ENCODE measurements at regions of chr12 and their contacts with region 1.

Region 1: GRCh38 chr12:95942524-95943329 is at the start of gene CCDC38:
- DNase-seq: peak; percentile 78
- H3K4me3 Mint-ChIP-seq: peak within 1 kb of the TSS; percentile 92
- H3K27ac Mint-ChIP-seq: peak within 1 kb of the TSS; percentile 95
- H3K4me1 Mint-ChIP-seq: peaks cover 5% of the 10 kb centered on the region
- H3K27me3 Mint-ChIP-seq: peaks cover 24% of the 10 kb centered on the region
- total RNA-seq, gene CCDC38: not detected in 2 replicates

Region 2: GRCh38 chr12:95003213-95003920 is 939.4 kb before region 1 on chr12 and contains the start of gene NDUFA12:
- intact Hi-C with region 1: loop called (anchors 5 kb)
- DNase-seq: peak; percentile 94
- H3K4me3 Mint-ChIP-seq: peak within 1 kb of the TSS; percentile 95
- H3K27ac Mint-ChIP-seq: peak within 1 kb of the TSS; percentile 93
- H3K4me1 Mint-ChIP-seq: peaks cover 30% of the 10 kb centered on the region
- H3K27me3 Mint-ChIP-seq: no peaks in the 10 kb centered on the region
- total RNA-seq, gene NDUFA12: 113 TPM in 2 replicates

Region 3: DNA sequence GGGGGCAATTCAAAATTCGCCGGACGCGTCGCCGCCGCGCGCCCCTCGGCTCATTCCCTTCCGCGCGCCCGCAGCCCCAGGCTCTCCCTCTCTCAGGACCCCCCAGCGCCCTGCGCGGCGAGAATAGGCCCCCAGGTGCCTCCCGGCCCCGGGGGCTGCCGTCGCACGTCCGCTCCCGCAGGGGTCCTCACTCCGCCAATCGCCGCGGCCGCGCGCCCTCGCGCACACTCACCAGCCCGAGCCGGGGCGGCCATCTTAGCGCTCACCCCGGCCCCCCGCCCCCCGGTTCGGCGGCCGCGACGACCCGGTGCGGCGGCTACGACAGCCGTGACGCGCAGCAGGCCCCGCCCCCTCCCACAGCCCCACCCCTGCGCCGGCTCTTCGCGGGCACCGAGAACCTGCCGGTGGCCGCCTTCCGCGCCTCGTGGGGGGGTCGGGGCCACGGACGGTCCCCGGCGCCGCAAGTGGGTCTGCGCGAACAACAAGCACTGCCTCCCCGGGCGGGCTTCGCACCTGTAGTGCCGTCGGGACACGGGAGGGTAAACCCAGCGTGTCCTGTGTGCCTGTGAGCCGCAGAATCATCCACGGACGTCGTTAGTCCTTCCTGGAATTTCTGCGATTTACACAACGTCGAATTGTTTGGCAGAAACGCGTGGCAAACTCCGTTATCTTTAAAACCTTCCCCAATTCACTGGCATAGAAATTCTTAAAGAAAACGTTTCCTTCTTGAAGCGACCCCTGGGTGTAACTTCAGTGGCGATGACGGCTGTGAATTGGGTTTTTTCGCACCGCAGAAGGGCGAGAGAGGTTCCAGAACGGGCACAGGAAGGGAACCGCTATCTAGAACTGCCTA is 394.0 kb before region 1 on chr12:
- intact Hi-C with region 1: loop called (anchors 5 kb)
- DNase-seq: peak; percentile 66
- H3K4me3 Mint-ChIP-seq: peak overlapping the region; percentile 91
- H3K27ac Mint-ChIP-seq: peak overlapping the region; percentile 62
- H3K4me1 Mint-ChIP-seq: peaks cover 34% of the 10 kb centered on the region
- H3K27me3 Mint-ChIP-seq: peaks cover 3% of the 10 kb centered on the region

Region 4: DNA sequence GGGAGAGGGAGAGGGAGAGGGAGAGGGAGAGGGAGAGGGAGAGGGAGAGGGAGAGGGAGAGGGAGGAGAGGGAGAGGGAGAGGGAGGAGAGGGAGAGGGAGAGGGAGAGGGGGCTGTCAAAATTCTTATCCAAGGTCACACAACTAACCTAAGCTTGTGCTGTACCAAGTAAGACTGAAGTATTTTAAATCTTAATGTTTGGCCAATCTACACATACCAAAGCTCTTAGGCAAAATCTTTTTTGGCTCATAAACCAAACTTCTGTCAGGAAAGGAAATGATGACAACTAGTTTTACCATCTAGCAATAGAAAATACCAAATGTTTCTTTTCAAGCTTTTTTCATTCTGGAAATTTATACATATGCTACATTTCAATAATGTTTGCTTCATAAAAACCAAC is 34.2 kb before region 1 on chr12:
- intact Hi-C with region 1: no loop called
- DNase-seq: no peak
- H3K4me3 Mint-ChIP-seq: no peak overlapping the region
- H3K27ac Mint-ChIP-seq: no peak overlapping the region
- H3K4me1 Mint-ChIP-seq: no peaks in the 10 kb centered on the region
- H3K27me3 Mint-ChIP-seq: peaks cover 20% of the 10 kb centered on the region

Region 5: DNA sequence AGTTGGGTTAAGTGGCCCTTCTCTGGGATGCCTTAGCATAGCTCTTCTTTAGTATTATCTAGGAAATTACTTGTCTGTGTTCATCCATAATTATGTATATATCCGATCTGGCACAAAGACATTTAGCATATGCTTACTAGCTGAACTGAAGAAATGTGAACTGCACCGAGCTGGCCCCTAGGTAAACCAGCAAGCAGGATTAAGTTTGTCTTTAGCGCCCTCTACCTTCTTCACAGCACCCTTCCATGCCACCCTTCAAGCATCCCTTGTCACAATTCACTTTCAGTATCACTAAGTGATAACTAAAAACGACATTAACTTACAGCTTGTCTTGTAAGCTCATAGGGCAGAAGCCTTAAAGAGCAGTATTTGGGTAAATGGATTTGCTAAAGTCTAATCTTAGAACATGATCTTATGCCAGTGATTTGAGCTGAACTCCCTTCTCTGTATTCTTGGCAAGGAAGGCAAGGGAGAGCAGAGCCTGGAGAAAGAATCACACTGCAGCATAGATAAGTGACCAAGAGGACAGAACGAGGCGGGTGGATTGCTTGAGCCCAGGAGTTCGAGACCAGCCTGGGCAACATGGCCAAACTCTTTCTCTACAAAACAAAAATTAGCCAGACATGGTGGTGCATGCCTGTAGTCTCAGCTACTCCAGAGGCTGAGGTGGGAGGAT is 56.0 kb after region 1 on chr12:
- intact Hi-C with region 1: loop called (anchors 2 kb)
- DNase-seq: peak; percentile 42
- H3K4me3 Mint-ChIP-seq: no peak overlapping the region
- H3K27ac Mint-ChIP-seq: peak overlapping the region; percentile 20
- H3K4me1 Mint-ChIP-seq: peaks cover 18% of the 10 kb centered on the region
- H3K27me3 Mint-ChIP-seq: no peaks in the 10 kb centered on the region

Region 6: GRCh38 chr12:96194971-96195844 is 252.5 kb after region 1 on chr12:
- intact Hi-C with region 1: loop called (anchors 5 kb)
- DNase-seq: peak; percentile 68
- H3K4me3 Mint-ChIP-seq: peak overlapping the region; percentile 96
- H3K27ac Mint-ChIP-seq: peak overlapping the region; percentile 98
- H3K4me1 Mint-ChIP-seq: peaks cover 49% of the 10 kb centered on the region
- H3K27me3 Mint-ChIP-seq: no peaks in the 10 kb centered on the region

Measured in activated T-helper 1 cell treated with anti-CD3 and anti-CD28 coated beads, Interleukin-12 subunit alpha, Interleukin-12 subunit beta, Interleukin-2, Interleukin-4 antibody, amounts not matched to agents 30 ng/mL and 10 ng/mL and 1 ng/mL, durations not matched to agents 14 hours and 24 hours and 36 hours (primary cell).